IMR-90 (cell line): ENCODE measurements at regions of chr7 and their contacts with region 1.

Region 1: GRCh38 chr7:110442381-110442837 is 648.5 kb upstream of the LRRN3 start:
- DNase-seq: peak; percentile 37
- ATAC-seq: peak; percentile 79
- H3K4me3 ChIP-seq: no peak overlapping the region
- H3K27ac ChIP-seq: no peak overlapping the region
- H3K4me1 ChIP-seq: no peaks in the 10 kb centered on the region
- H3K27me3 ChIP-seq: no peaks in the 10 kb centered on the region
- CTCF ChIP-seq: peak; percentile 55
- POLR2A ChIP-seq: no peak
- RAD21 ChIP-seq: peak; percentile 75

Region 2: DNA sequence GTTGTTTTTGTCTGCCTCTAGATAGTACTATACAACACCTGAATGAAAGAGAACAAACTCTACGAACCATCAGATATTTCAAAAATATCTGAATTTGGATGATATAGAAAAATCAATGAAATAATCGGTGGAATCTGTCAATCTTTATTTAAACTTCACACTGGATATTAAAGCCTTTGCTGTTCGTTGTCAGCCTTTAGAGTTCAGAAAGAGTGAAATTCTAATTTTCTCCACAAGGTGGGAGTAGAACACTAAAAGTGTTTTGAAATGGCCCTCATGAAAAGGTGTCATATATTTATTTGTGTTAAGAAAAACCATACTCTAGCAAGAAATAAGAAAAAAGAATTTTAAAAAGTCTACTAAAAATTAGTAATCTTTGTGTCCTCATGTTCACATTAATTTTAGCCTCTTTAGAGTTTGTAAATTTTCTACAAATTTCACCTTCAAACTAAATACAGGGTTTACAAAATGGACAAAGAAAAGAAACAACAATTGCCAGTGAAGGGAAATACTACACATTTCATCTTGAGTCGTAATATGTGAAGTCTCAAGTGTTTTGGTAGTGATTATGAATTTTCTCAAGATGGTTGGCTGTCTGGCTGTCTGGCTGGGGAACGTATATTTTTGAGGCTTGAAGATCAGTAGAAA is 1829.2 kb before region 1 on chr7:
- CTCF ChIA-PET with region 1: no interaction called
- POLR2A ChIA-PET with region 1: no interaction called
- dilution Hi-C with region 1: no loop called
- in situ Hi-C with region 1: loop called (anchors 25 kb)
- intact Hi-C with region 1: no loop called
- DNase-seq: peak; percentile 25
- ATAC-seq: peak; percentile 65
- H3K4me3 ChIP-seq: no peak overlapping the region
- H3K27ac ChIP-seq: no peak overlapping the region
- H3K4me1 ChIP-seq: no peaks in the 10 kb centered on the region
- H3K27me3 ChIP-seq: peaks cover 2% of the 10 kb centered on the region
- CTCF ChIP-seq: peak; percentile 63
- POLR2A ChIP-seq: no peak
- RAD21 ChIP-seq: peak; percentile 65

Region 3: GRCh38 chr7:109503421-109503820 is 939.0 kb before region 1 on chr7:
- CTCF ChIA-PET with region 1: no interaction called
- POLR2A ChIA-PET with region 1: interaction called, 14 read pairs
- dilution Hi-C with region 1: no loop called
- in situ Hi-C with region 1: no loop called
- intact Hi-C with region 1: no loop called
- DNase-seq: no peak
- ATAC-seq: no peak
- H3K4me3 ChIP-seq: no peak overlapping the region
- H3K27ac ChIP-seq: no peak overlapping the region
- H3K4me1 ChIP-seq: no peaks in the 10 kb centered on the region
- H3K27me3 ChIP-seq: no peaks in the 10 kb centered on the region
- CTCF ChIP-seq: no peak
- POLR2A ChIP-seq: no peak
- RAD21 ChIP-seq: no peak

Region 4: GRCh38 chr7:110090110-110090769 is 352.2 kb before region 1 on chr7:
- CTCF ChIA-PET with region 1: no interaction called
- POLR2A ChIA-PET with region 1: no interaction called
- dilution Hi-C with region 1: no loop called
- in situ Hi-C with region 1: no loop called
- intact Hi-C with region 1: loop called (anchors 5 kb)
- DNase-seq: peak; percentile 37
- ATAC-seq: no peak
- H3K4me3 ChIP-seq: no peak overlapping the region
- H3K27ac ChIP-seq: no peak overlapping the region
- H3K4me1 ChIP-seq: no peaks in the 10 kb centered on the region
- H3K27me3 ChIP-seq: no peaks in the 10 kb centered on the region
- CTCF ChIP-seq: peak; percentile 48
- POLR2A ChIP-seq: no peak
- RAD21 ChIP-seq: peak; percentile 50